ENCODE measurements at regions of chr17 and their contacts with region 1.

Region 1: GRCh38 chr17:67139784-67140657 is 95.7 kb downstream of the CACNG1 start:
- DNase-seq: no peak
- H3K4me3 ChIP-seq: no peak overlapping the region
- H3K27ac ChIP-seq: no peak overlapping the region
- H3K4me1 ChIP-seq: no peaks in the 10 kb centered on the region
- H3K27me3 ChIP-seq: no peaks in the 10 kb centered on the region
- CTCF ChIP-seq: no peak
- POLR2A ChIP-seq: no peak

Region 2: DNA sequence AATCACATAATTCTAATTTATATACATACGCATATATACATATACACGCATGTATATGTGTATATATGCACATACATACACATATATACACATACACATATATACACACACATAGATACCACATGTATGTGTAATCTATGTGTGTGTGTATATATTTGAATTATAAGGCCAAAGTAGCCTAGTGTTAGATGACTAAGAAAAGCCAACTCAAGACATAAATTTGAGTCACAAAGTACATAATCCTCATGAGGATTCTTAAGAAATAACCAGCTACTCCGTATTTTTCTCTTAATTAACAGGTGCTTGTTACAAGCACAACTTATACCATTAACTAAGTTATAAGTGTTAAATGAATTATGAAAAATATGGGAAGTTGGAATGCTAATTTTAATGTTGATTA is 10.7 kb before region 1 on chr17:
- CTCF ChIA-PET with region 1: interaction called, 10 read pairs
- POLR2A ChIA-PET with region 1: no interaction called
- dilution Hi-C with region 1: no loop called
- intact Hi-C with region 1: no loop called
- DNase-seq: no peak
- H3K4me3 ChIP-seq: no peak overlapping the region
- H3K27ac ChIP-seq: no peak overlapping the region
- H3K4me1 ChIP-seq: no peaks in the 10 kb centered on the region
- H3K27me3 ChIP-seq: no peaks in the 10 kb centered on the region
- CTCF ChIP-seq: no peak
- POLR2A ChIP-seq: no peak

Measured in endothelial cell of umbilical vein (primary cell).